ENCODE measurements at regions of chr1 and their contacts with region 1.

Region 1: GRCh38 chr1:160997323-160998038 is 23.5 kb downstream of the F11R start:
- DNase-seq: peak; percentile 80

Region 2: DNA sequence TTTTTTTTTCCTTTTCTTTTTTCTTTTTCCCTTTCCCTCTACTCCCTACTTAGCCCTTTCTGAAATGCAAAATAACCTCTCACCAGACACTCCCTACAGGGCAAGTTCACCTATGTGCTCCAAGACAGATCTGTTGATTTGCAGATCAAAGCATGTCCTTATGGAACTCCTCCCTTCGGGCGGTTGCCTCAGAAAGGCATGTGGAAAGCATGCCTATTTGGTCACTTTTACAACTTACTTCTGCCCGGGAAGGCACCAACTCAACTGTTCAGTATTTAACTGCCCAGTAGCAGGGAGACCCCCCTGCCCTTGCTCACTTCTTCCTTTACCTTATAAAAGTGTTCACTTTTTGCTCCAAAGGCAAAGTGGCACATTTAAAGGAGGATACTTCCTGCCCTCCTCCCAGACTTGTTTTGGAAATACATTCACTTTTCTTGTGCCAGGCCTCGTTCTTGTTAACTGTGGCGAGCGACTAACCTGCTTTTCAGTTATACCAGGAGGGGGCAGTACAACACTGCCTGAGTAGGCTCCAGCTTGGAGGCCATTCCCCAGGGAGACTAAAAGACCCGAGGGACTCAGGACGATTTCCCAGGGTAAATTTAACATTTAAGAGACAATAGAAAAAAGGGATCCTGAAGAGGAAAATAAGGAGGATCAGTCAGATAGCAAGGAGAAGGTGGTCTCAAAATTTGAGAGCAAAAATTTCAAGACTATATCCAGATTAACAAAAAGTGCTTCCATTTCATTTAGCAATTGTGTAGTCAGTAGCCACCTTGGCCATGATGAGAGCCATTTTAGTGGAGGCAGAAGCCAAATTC is 270.8 kb before region 1 on chr1:
- intact Hi-C with region 1: loop called (anchors 2 kb)
- DNase-seq: peak; percentile 79

Region 3: DNA sequence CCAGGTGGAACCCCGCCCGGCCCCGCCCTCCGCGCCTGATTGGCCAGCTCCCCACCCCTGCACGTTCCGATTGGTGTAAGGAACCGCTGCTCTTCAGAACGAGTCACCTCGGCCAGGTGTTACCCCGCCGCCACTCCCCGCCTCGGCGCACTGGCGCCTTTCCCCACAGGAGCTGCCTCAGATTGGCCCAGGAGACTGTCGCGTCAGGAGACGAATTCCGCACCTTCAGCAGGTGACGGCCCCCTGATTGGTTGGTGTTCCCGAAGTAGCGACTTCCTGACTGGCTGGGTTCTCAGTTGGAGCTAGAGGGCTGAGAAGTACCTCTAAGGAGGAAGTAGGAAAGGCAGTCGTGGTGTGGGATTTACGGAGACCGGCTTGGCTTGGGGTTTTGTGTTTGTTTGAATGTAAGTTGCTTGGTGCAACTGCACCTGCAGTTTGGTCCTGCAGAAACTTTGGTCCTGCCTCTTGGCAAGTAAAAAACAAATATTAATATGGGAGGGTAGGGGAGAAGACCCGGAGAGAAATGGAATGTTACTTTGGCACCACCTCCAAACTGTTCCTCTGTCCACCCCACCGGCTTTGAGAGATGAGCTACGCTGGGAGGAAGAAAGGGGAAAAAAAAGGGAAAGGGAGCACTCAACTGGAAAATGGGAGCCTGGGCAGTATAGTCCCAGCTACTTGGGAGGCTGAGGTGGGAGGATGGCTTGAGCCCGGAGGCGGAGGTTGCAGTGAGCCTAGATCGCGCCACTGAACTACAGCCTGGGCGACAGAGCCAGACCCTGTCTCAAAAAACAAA is 23.9 kb after region 1 on chr1:
- intact Hi-C with region 1: loop called (anchors 2 kb)
- DNase-seq: peak; percentile 92

Region 4: GRCh38 chr1:161089171-161089924 is 91.9 kb after region 1 on chr1 and contains the start of gene NECTIN4:
- intact Hi-C with region 1: loop called (anchors 5 kb)
- DNase-seq: peak; percentile 68
- total RNA-seq, gene NECTIN4: not detected

Region 5: DNA sequence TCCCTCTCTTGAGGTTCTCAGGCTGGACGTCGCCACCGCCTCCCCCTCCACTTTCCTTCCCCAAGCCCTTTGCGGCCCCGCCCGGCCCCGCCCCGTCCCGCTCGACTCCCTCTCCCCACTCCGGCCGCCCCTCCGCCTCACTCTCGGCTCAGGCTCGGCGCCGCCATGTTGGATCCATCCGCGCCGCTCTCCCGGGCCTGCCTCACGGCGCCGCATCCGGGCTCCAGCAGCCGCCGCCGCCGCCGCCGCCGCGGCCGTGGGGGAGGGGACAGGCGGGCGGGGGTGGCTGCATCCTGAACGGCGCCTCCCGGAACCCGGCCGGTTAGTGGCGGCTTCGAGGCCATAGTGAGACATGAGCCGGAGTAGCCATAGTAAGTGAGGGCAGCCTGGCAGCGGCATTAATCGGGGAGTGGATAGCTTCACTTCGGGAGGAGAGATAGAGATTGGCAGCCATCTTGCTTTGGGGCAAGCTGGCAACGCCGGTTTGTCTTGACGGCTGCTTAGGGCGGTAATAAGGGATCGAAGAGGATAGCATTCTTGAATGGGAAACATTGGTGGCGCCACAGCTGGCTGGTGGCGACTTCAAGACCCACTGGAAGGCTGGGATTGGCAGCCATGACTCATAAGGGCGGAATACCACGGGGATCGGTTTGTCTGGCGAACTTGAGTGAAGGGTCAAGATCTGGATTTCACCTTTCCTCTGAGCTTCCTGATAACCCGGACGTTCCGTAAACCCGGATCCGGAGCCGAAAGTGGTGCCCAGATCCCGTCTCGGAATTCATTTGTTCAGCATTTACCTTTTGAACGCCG is 135.1 kb after region 1 on chr1 and contains the start of gene DEDD:
- intact Hi-C with region 1: loop called (anchors 10 kb)
- DNase-seq: peak; percentile 97
- total RNA-seq, gene DEDD: 28.3 TPM

Measured in cardiac septum (tissue), 1 donor.